Activated CD4-positive, alpha-beta T cell treated with anti-CD3 and anti-CD28 coated beads for 36 hours (primary cell): ENCODE measurements at regions of chr19 and their contacts with region 1.

Region 1: DNA sequence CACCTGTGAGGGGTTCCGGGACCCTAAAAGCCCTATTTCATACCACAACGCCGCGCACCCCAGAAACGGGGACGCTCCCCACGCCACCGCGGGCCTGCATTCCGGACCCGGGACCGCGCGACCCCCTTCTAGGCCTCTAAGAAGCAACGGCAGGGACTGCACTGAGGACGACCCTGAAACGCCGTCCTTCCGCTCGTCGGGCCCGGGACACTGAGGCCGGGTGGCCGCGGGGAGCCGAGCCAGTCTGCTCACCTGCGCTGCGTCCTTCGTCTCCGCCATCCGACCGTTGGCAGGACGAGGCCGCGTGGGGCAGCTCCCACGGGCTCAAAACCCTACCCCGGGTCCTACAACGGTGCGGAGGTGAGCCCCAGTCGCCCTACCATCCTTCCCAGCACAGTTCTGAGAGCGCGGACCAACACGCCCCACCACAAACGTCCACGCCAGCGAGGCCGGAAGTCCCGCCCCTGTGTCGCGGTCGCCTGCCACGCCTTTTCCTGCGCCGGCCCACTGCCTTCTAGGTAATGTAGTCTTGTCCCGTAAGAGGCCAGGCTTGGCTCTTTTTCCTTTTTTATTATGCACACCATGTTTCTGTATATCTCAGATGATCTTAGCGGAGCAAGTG is at the start of gene ZNF550:
- DNase-seq: peak; percentile 93
- ATAC-seq: peak; percentile 97
- H3K4me3 Mint-ChIP-seq: peak within 1 kb of the TSS; percentile 98
- H3K27ac Mint-ChIP-seq: peak within 1 kb of the TSS; percentile 93
- H3K4me1 Mint-ChIP-seq: peaks cover 22% of the 10 kb centered on the region
- H3K27me3 Mint-ChIP-seq: no peaks in the 10 kb centered on the region
- total RNA-seq, gene ZNF550: 11.8 to 11.9 TPM

Region 2: GRCh38 chr19:57350877-57351805 is 208.4 kb before region 1 on chr19 and contains the start of gene ZNF304:
- CTCF ChIA-PET with region 1: no interaction called
- POLR2A ChIA-PET with region 1: no interaction called
- intact Hi-C with region 1: loop called in 1 of 2 experiments (anchors 1 kb)
- DNase-seq: peak; percentile 94
- ATAC-seq: peak; percentile 100
- H3K4me3 Mint-ChIP-seq: peak within 1 kb of the TSS; percentile 96
- H3K27ac Mint-ChIP-seq: peak within 1 kb of the TSS; percentile 90
- H3K4me1 Mint-ChIP-seq: peaks cover 25% of the 10 kb centered on the region
- H3K27me3 Mint-ChIP-seq: peaks cover 4% of the 10 kb centered on the region
- total RNA-seq, gene ZNF304: 6.2 TPM

Region 3: DNA sequence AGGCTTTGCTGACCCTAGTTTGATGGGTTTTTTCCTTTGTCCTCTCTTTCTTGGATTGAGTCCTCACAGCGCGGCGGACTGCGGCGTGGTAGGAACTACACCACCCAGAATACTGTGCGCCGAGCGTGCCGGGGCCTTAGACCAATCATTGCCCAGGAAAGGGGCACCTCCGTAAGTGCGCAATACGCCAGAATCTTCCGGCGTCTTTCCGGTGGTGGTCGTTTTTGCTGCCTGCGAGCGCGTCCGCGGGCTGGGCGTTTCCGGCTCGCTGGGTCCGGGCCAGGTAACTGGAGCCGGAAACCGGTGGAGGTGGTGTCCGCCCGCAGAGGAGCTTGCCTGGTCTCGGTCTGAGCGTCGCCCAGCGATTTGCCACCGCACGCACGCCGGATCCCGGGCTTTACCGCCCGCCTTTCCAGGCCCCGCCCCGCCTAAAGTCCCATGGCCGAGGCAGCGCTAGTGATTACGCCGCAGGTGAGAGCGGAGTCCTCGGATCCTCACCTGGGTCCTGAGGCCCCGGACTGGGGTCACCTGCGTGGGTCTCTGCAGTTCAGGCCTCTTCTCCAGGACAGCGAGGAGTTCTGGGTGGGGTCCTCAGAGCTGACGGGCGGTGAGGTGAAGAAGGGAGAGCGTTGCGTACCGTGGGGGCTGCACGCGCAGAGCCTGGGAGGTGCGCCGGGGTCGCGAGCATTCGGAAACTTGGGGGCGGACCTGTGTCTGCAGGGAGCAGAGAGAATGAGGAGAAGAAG is 32.2 kb before region 1 on chr19 and contains the start of gene ZNF549:
- CTCF ChIA-PET with region 1: no interaction called
- POLR2A ChIA-PET with region 1: no interaction called
- intact Hi-C with region 1: loop called in 1 of 2 experiments (anchors 1 kb)
- DNase-seq: peak; percentile 93
- ATAC-seq: peak; percentile 100
- H3K4me3 Mint-ChIP-seq: peak within 1 kb of the TSS; percentile 82
- H3K27ac Mint-ChIP-seq: peak within 1 kb of the TSS; percentile 84
- H3K4me1 Mint-ChIP-seq: peaks cover 18% of the 10 kb centered on the region
- H3K27me3 Mint-ChIP-seq: no peaks in the 10 kb centered on the region
- total RNA-seq, gene ZNF549: 3.7 to 4.6 TPM

Region 4: DNA sequence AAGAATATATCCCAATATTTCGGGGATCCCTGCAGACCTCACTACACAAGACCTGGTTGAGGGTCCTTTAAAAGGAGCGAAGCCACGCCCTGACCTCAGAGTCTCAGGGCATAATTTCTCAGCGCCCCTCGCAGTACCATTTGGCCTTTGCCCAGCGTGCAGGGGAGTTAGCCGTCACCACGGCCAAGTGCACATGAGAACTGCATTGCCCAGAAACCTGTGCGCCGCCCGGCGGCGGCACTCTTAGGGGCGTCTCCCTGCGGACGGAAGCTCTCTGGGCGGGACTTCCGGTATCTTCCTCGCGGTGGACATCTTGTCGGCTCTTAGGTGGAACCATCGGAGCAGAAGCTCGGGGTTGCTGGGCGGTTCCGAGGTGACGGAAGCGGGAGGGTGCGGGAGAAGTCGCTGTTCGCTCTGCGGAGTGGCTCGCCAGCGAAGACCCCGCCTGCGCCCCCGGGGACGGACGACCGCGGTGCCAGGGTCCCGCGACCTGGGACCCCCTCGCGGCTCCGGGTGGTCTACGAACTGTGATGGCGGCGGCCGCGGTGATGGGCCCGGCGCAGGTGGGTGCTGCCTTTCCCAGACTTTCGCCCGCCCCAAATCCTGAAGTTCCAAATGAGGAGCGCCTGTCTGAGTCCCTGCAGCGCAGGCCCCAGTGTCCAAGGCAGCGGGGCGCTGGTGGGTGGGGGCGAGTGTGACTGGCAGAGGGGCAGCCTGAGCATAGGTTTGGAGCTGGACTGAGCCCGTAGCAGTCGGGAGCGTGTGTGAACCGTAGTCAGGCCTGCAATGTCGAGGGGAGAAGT is 54.6 kb after region 1 on chr19 and contains the start of gene ZNF134:
- CTCF ChIA-PET with region 1: no interaction called
- POLR2A ChIA-PET with region 1: no interaction called
- intact Hi-C with region 1: loop called in 1 of 2 experiments (anchors 1 kb)
- DNase-seq: peak; percentile 94
- ATAC-seq: peak; percentile 99
- H3K4me3 Mint-ChIP-seq: peak within 1 kb of the TSS; percentile 89
- H3K27ac Mint-ChIP-seq: peak within 1 kb of the TSS; percentile 79
- H3K4me1 Mint-ChIP-seq: peaks cover 19% of the 10 kb centered on the region
- H3K27me3 Mint-ChIP-seq: no peaks in the 10 kb centered on the region
- total RNA-seq, gene ZNF134: 7.6 to 9.7 TPM